ENCODE measurements at regions of chr2 and their contacts with region 1.

Region 1: GRCh38 chr2:113324684-113325160 is 46.0 kb upstream of the PAX8 start:
- DNase-seq: no peak

Region 2: GRCh38 chr2:111975053-111975552 is 1349.6 kb before region 1 on chr2:
- intact Hi-C with region 1: loop called in 1 of 2 experiments (anchors 10 kb)
- DNase-seq: no peak

Measured in posterior vena cava (tissue), 2 donors.